Activated CD4-positive, alpha-beta T cell treated with anti-CD3 and anti-CD28 coated beads for 36 hours (primary cell): ENCODE measurements at regions of chr13 and their contacts with region 1.

Region 1: GRCh38 chr13:110944121-110944967 is 29.5 kb upstream of the ANKRD10 start:
- DNase-seq: peak; percentile 65
- ATAC-seq: peak; percentile 84
- H3K4me3 Mint-ChIP-seq: no peak overlapping the region
- H3K27ac Mint-ChIP-seq: no peak overlapping the region
- H3K4me1 Mint-ChIP-seq: peaks cover 33% of the 10 kb centered on the region
- H3K27me3 Mint-ChIP-seq: peaks cover 8% of the 10 kb centered on the region

Region 2: GRCh38 chr13:110965038-110965754 is 20.9 kb after region 1 on chr13:
- CTCF ChIA-PET with region 1: interaction called, 3 read pairs
- POLR2A ChIA-PET with region 1: no interaction called
- intact Hi-C with region 1: loop called (anchors 1 kb)
- DNase-seq: peak; percentile 55
- ATAC-seq: peak; percentile 92
- H3K4me3 Mint-ChIP-seq: peak overlapping the region; percentile 39
- H3K27ac Mint-ChIP-seq: peak overlapping the region; percentile 78
- H3K4me1 Mint-ChIP-seq: peaks cover 18% of the 10 kb centered on the region
- H3K27me3 Mint-ChIP-seq: peaks cover 8% of the 10 kb centered on the region

Region 3: DNA sequence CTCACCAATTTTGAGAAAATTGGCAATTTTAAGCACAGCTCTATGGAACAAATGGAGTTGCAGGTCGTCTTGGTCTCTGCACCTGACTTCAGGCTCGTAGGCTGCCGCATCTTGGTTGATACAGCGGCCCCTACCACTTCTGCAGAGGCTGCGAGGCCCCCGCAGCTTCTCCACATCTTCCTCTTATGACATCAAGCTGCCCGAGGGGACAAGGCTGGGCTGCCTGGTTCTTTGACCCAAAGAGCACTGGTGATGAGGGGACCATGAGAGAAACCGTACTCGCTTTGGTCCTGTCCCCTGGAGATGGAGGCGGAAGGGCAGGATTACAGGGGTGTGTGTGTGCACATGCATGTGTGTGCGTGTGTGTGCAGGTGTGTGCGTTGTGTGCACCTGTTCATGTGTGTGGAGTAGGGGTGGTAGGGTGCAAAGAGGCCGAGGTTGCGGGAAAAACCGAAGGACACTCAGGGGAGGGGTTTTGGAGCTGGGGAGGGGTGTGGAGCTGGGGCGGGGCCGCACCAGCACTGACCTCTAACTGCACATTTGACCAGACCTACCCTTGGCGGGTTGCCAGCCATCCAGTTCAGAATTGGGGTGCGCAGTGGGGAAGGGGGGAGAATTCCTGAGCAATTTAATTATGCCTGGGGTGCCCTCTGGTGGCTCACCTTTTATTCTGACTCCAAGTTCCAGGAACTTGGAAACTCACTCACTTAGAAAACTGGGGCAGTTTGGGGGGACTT is 105.6 kb after region 1 on chr13:
- CTCF ChIA-PET with region 1: interaction called, 3 read pairs
- POLR2A ChIA-PET with region 1: no interaction called
- intact Hi-C with region 1: loop called in 1 of 2 experiments (anchors 1 kb)
- DNase-seq: peak; percentile 21
- ATAC-seq: no peak
- H3K4me3 Mint-ChIP-seq: no peak overlapping the region
- H3K27ac Mint-ChIP-seq: no peak overlapping the region
- H3K4me1 Mint-ChIP-seq: peaks cover 4% of the 10 kb centered on the region
- H3K27me3 Mint-ChIP-seq: peaks cover 10% of the 10 kb centered on the region